T-cell (primary cell): ENCODE measurements at regions of chr10 and their contacts with region 1.

Region 1: DNA sequence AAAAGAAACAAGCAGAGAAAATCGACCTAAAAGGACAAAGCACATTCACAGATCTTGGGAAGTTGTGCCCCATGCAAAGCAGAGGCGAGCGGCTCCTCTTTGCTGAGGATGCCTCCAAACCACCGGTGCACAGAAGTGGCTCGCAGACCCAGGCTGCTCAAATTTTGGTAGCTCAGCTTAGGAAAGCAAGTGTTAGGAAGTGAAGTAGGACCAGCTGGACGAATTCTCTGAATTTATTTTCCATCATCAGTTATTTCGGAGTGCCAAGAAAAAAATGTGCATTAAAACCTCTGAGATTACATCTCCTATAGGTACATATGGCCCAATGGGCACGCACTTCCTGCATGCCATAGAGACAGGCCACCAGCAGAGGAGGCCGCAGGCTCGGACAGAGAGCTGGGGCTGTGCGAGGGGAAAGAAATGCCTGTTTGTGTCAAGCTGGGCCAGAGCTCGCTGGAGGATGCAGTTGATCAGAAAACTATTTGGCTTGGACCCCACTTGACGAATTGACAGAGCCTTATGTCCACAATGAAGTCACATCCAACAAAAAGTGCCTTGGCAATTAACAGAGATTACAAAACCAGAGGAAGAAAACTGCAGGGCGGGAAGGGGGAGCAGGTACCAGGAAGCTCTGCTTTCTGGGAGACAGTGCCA is 122.3 kb upstream of the LYZL2 start:
- DNase-seq: peak in 17 of 35 experiments; percentile 48 to 72 (median 62)
- ATAC-seq: peak in 3 of 4 experiments; percentile 68 to 99 (median 84)
- H3K4me3 ChIP-seq: no peak overlapping the region
- H3K4me3 Mint-ChIP-seq: peak overlapping the region in 2 of 3 donors; percentile 39 to 45
- H3K27ac ChIP-seq: no peak overlapping the region
- H3K27ac Mint-ChIP-seq: peak overlapping the region in 1 of 2 donors; percentile 58
- H3K4me1 ChIP-seq: peaks cover 6 to 49% of the 10 kb centered on the region in 2 experiments
- H3K4me1 Mint-ChIP-seq: peaks cover 19 to 30% (median 23%) of the 10 kb centered on the region in 3 donors
- H3K27me3 ChIP-seq: no peaks in the 10 kb centered on the region
- H3K27me3 Mint-ChIP-seq: peaks cover 0 to 4% of the 10 kb centered on the region in 2 donors

Region 2: GRCh38 chr10:30675791-30676718 is 75.8 kb before region 1 on chr10:
- CTCF ChIA-PET with region 1: no interaction called
- POLR2A ChIA-PET with region 1: no interaction called
- DNase-seq: no peak
- ATAC-seq: no peak
- H3K4me3 ChIP-seq: no peak overlapping the region
- H3K4me3 Mint-ChIP-seq: no peak overlapping the region
- H3K27ac ChIP-seq: no peak overlapping the region
- H3K27ac Mint-ChIP-seq: no peak overlapping the region
- H3K4me1 ChIP-seq: no peaks in the 10 kb centered on the region
- H3K4me1 Mint-ChIP-seq: peaks cover 0 to 1% (median 0%) of the 10 kb centered on the region in 3 donors
- H3K27me3 ChIP-seq: peaks cover 0 to 14% of the 10 kb centered on the region in 2 experiments
- H3K27me3 Mint-ChIP-seq: peaks cover 4 to 14% of the 10 kb centered on the region in 2 donors

Region 3: GRCh38 chr10:31808258-31809218 is 1056.7 kb after region 1 on chr10:
- CTCF ChIA-PET with region 1: interaction called in 1 of 2 experiments, 12 read pairs
- POLR2A ChIA-PET with region 1: no interaction called
- DNase-seq: peak in 9 of 35 experiments; percentile 0 to 75 (median 4)
- ATAC-seq: peak; percentile 40 to 62 (median 51)
- H3K4me3 ChIP-seq: no peak overlapping the region
- H3K4me3 Mint-ChIP-seq: peak overlapping the region in 1 of 3 donors; percentile 44
- H3K27ac ChIP-seq: peak overlapping the region; percentile 15
- H3K27ac Mint-ChIP-seq: peak overlapping the region; percentile 71 to 80
- H3K4me1 ChIP-seq: peaks cover 0 to 4% of the 10 kb centered on the region in 2 experiments
- H3K4me1 Mint-ChIP-seq: peaks cover 5 to 11% (median 8%) of the 10 kb centered on the region in 3 donors
- H3K27me3 ChIP-seq: no peaks in the 10 kb centered on the region
- H3K27me3 Mint-ChIP-seq: no peaks in the 10 kb centered on the region